ENCODE measurements at regions of chr14 and their contacts with region 1.

Region 1: GRCh38 chr14:104895786-104896661 is 28.7 kb upstream of the PLD4 start:
- DNase-seq: peak in 1 of 2 experiments; percentile 33
- H3K4me3 ChIP-seq: no peak overlapping the region
- H3K4me3 Mint-ChIP-seq: no peak overlapping the region
- H3K27ac Mint-ChIP-seq: no peak overlapping the region
- H3K4me1 ChIP-seq: no peaks in the 10 kb centered on the region
- H3K4me1 Mint-ChIP-seq: no peaks in the 10 kb centered on the region
- H3K27me3 ChIP-seq: no peaks in the 10 kb centered on the region
- H3K27me3 Mint-ChIP-seq: peaks cover 1% of the 10 kb centered on the region
- CTCF ChIP-seq: no peak

Region 2: GRCh38 chr14:104940526-104941150 is 44.6 kb after region 1 on chr14:
- CTCF ChIA-PET with region 1: interaction called, 9 read pairs
- POLR2A ChIA-PET with region 1: no interaction called
- intact Hi-C with region 1: loop called (anchors 2 kb)
- DNase-seq: no peak
- H3K4me3 ChIP-seq: no peak overlapping the region
- H3K4me3 Mint-ChIP-seq: no peak overlapping the region
- H3K27ac Mint-ChIP-seq: no peak overlapping the region
- H3K4me1 ChIP-seq: no peaks in the 10 kb centered on the region
- H3K4me1 Mint-ChIP-seq: no peaks in the 10 kb centered on the region
- H3K27me3 ChIP-seq: peaks cover 1% of the 10 kb centered on the region
- H3K27me3 Mint-ChIP-seq: peaks cover 7% of the 10 kb centered on the region
- CTCF ChIP-seq: peak; percentile 22 to 58

Region 3: GRCh38 chr14:106308839-106309389 is 1412.9 kb after region 1 on chr14:
- CTCF ChIA-PET with region 1: interaction called, 10 read pairs
- POLR2A ChIA-PET with region 1: no interaction called
- intact Hi-C with region 1: no loop called
- DNase-seq: peak in 1 of 2 experiments; percentile 67
- H3K4me3 ChIP-seq: no peak overlapping the region
- H3K4me3 Mint-ChIP-seq: no peak overlapping the region
- H3K27ac Mint-ChIP-seq: no peak overlapping the region
- H3K4me1 ChIP-seq: no peaks in the 10 kb centered on the region
- H3K4me1 Mint-ChIP-seq: no peaks in the 10 kb centered on the region
- H3K27me3 ChIP-seq: no peaks in the 10 kb centered on the region
- H3K27me3 Mint-ChIP-seq: peaks cover 3% of the 10 kb centered on the region
- CTCF ChIP-seq: peak; percentile 85 to 87